ENCODE measurements at regions of chr15 and their contacts with region 1.

Region 1: GRCh38 chr15:72722071-72722696 is 36.2 kb downstream of the BBS4 start:
- DNase-seq: peak; percentile 79
- ATAC-seq: peak; percentile 36
- H3K4me3 Mint-ChIP-seq: no peak overlapping the region
- H3K27ac Mint-ChIP-seq: no peak overlapping the region
- H3K4me1 Mint-ChIP-seq: peaks cover 2% of the 10 kb centered on the region
- H3K27me3 Mint-ChIP-seq: no peaks in the 10 kb centered on the region

Region 2: DNA sequence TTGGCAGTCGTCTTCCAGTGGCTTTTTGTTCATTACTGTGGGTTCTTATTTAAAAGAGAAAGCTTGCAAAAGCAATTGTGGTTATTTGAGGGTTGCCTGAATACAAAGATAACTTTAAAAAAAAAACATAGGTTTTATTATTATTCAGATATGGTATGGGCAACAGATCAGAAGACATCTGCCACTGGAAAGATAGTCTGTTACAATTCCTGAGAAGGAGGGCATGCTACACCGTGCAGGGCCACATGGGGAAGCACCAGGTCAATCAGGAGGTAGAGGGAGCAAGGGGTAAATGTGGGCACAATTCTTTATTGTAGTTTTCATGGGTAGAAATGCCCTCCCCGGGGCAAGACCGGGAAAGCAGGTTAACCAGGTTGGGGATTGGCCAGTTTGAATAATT is 10.3 kb after region 1 on chr15:
- CTCF ChIA-PET with region 1: interaction called, 29 read pairs
- POLR2A ChIA-PET with region 1: no interaction called
- DNase-seq: no peak
- ATAC-seq: no peak
- H3K4me3 Mint-ChIP-seq: no peak overlapping the region
- H3K27ac Mint-ChIP-seq: no peak overlapping the region
- H3K4me1 Mint-ChIP-seq: peaks cover 4% of the 10 kb centered on the region
- H3K27me3 Mint-ChIP-seq: no peaks in the 10 kb centered on the region

Region 3: GRCh38 chr15:72751751-72752455 is 29.7 kb after region 1 on chr15:
- CTCF ChIA-PET with region 1: interaction called, 12 read pairs
- POLR2A ChIA-PET with region 1: no interaction called
- DNase-seq: no peak
- ATAC-seq: no peak
- H3K4me3 Mint-ChIP-seq: no peak overlapping the region
- H3K27ac Mint-ChIP-seq: peak overlapping the region; percentile 66
- H3K4me1 Mint-ChIP-seq: peaks cover 22% of the 10 kb centered on the region
- H3K27me3 Mint-ChIP-seq: no peaks in the 10 kb centered on the region

Region 4: GRCh38 chr15:72774696-72775383 is 52.7 kb after region 1 on chr15:
- CTCF ChIA-PET with region 1: interaction called, 23 read pairs
- POLR2A ChIA-PET with region 1: no interaction called
- DNase-seq: no peak
- ATAC-seq: no peak
- H3K4me3 Mint-ChIP-seq: no peak overlapping the region
- H3K27ac Mint-ChIP-seq: peak overlapping the region; percentile 30
- H3K4me1 Mint-ChIP-seq: peaks cover 27% of the 10 kb centered on the region
- H3K27me3 Mint-ChIP-seq: no peaks in the 10 kb centered on the region

Region 5: DNA sequence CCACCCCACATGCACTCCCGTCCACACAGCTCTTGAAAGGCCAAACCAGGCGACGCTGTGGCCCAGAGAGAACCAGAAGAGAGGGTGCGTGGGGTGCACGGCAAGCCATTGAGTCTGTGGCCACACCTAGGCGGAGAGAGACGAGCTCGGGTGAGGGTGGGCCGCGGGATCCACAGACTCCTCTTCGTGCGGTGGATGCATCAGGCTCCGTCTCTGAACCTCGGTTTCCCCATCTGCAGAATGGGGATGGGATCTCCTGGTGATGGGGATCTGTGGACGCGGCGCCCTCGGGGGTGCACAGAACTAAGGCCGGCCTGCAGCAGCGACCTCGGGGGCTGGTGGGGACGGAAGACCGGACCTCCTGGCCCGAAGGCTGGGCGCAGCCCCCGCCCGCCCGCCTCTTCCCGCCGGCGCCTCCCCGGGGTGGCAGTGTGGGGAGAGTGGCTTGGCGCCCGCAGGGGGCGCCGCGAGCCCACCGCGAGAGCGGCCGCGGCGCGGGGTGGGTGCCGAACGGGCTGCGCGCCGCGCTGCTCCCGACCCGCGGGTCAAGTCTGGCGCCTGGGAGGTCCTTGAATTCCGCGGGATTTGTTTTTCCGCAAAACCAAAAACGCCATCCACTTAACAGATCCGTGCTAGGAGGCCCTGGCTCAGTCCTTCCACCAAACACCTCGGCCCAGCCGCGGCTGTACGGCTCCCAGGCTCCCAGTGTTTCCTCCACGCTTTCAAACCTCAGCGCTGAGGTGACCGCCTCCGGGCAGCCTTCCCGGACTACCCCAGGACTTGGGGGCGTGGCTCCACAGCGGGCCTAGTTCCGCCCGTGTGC is 74.5 kb after region 1 on chr15:
- CTCF ChIA-PET with region 1: interaction called, 12 read pairs
- POLR2A ChIA-PET with region 1: no interaction called
- DNase-seq: peak; percentile 44
- ATAC-seq: peak; percentile 94
- H3K4me3 Mint-ChIP-seq: peak overlapping the region; percentile 77
- H3K27ac Mint-ChIP-seq: no peak overlapping the region
- H3K4me1 Mint-ChIP-seq: peaks cover 18% of the 10 kb centered on the region
- H3K27me3 Mint-ChIP-seq: peaks cover 42% of the 10 kb centered on the region